ENCODE measurements at regions of chr14 and their contacts with region 1.

Region 1: DNA sequence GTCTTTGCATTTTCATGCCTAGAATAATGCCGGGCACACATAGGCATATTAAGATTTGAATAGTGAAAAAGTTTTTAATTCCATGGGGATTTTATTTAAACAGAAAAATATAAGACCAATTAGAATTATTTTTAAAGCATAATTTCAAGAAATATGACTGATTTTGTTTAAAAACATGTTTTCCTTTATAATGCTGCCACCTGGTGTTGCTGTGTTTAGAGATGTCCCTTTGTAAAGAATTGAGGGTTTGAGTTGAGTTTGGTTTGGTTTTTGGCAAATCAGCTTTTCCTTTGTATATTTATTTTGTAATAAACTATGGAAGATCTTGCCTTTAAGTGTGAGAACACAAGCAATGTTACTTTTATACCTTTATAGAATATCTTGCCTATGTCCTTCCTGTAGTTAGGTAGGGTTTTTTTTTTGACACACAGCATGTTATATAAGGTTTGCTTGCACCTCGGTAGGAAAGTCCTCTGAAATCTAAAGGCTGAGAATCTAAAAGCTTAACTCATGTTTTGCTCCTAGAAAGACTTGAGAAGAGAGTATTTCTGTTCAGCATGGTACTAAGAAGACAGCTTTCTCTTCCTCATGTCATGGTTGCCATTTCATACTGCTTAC is 31.4 kb upstream of the SNAPC1 start:
- DNase-seq: no peak
- ATAC-seq: no peak
- H3K4me3 ChIP-seq: no peak overlapping the region
- H3K27ac ChIP-seq: no peak overlapping the region
- H3K4me1 ChIP-seq: no peaks in the 10 kb centered on the region
- H3K27me3 ChIP-seq: no peaks in the 10 kb centered on the region
- CTCF ChIP-seq: peak in 4 of 5 experiments; percentile 20 to 49 (median 40)
- POLR2A ChIP-seq: no peak

Region 2: GRCh38 chr14:61296719-61297502 is 434.0 kb before region 1 on chr14:
- in situ Hi-C with region 1: loop called in 2 of 4 experiments (anchors 25 kb)
- intact Hi-C with region 1: no loop called
- DNase-seq: no peak
- ATAC-seq: peak; percentile 62
- H3K4me3 ChIP-seq: no peak overlapping the region
- H3K27ac ChIP-seq: no peak overlapping the region
- H3K4me1 ChIP-seq: peaks cover 11 to 13% of the 10 kb centered on the region in 2 donors
- H3K27me3 ChIP-seq: no peaks in the 10 kb centered on the region
- CTCF ChIP-seq: peak; percentile 23 to 67 (median 55)
- POLR2A ChIP-seq: no peak